OCI-LY7 (cell line): ENCODE measurements at regions of chr1 and their contacts with region 1.

Region 1: DNA sequence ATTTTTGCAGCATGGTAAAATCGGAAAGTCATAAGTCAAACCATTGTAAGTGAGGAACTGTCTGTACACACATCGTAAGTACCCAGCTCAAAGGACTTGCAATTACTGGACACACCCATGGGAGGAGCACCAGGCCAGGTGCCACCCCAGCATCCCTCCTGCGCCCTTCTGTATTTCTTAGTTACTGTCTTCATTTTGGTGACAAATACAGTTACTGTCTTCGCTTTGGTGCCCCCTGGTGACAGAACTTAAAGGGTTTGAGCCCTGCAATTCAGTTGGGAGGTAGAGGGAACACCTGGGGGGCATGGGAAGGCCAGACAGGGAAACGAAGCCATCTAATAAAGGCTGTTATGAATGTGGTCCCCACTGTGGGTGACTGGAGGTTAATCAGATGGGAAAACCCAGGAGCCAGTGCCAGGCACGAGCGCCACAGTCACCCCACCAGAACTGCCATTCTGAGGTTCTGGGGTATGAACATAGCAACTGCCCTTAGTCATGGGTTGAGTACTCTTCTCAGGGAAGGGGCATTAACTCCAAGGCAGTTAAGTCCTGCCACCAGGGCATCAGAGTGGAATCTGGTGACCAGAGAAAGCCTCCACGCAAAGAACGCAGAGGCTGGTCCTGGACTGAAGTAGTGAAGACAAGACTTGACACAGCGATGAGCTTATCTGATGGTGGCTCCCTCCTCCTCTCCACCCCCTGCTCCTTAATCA is 612.9 kb downstream of the PTPRU start:
- DNase-seq: peak; percentile 57
- H3K4me3 ChIP-seq: no peak overlapping the region
- H3K27ac ChIP-seq: no peak overlapping the region
- H3K4me1 ChIP-seq: no peaks in the 10 kb centered on the region
- CTCF ChIP-seq: peak; percentile 77

Region 2: GRCh38 chr1:29235955-29236684 is 613.1 kb before region 1 on chr1 and contains the start of gene PTPRU:
- CTCF ChIA-PET with region 1: no interaction called
- POLR2A ChIA-PET with region 1: no interaction called
- intact Hi-C with region 1: loop called (anchors 2 kb)
- DNase-seq: peak; percentile 73
- H3K4me3 ChIP-seq: peak within 1 kb of the TSS; percentile 50
- H3K27ac ChIP-seq: no peak within 1 kb of the TSS
- H3K4me1 ChIP-seq: peaks cover 18% of the 10 kb centered on the region
- CTCF ChIP-seq: peak; percentile 71
- total RNA-seq, gene PTPRU: 2.5 and 7.3 TPM in 2 replicates

Region 3: GRCh38 chr1:29379443-29380073 is 469.6 kb before region 1 on chr1:
- CTCF ChIA-PET with region 1: no interaction called
- POLR2A ChIA-PET with region 1: no interaction called
- intact Hi-C with region 1: loop called (anchors 5 kb)
- DNase-seq: peak; percentile 44
- H3K4me3 ChIP-seq: no peak overlapping the region
- H3K27ac ChIP-seq: no peak overlapping the region
- H3K4me1 ChIP-seq: no peaks in the 10 kb centered on the region
- CTCF ChIP-seq: peak; percentile 97

Region 4: DNA sequence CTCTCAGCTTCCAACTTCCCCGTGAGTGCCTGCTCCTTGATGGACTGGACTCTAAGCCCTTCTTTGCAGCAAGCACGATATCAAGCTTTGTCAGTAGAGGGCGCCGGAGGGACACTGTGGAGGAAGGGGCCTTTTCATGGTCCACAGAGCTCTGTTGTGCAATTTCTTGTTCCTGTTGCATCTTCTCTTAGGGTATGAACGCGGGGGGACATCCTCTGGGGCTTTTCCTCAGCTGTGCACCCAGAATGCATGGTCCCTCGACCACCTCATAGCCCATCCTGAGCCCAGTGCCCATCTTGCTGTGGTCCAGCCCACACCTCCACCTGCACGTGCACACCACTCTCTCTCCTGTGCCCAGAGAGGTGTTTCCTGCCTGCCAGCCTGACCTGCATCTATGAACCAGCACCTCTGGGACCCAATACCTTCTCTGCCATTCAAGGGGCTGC is 56.1 kb before region 1 on chr1:
- CTCF ChIA-PET with region 1: interaction called, 3 read pairs
- POLR2A ChIA-PET with region 1: no interaction called
- intact Hi-C with region 1: loop called (anchors 1 kb)
- DNase-seq: peak; percentile 80
- H3K4me3 ChIP-seq: no peak overlapping the region
- H3K27ac ChIP-seq: no peak overlapping the region
- H3K4me1 ChIP-seq: peaks cover 5% of the 10 kb centered on the region
- CTCF ChIP-seq: peak; percentile 88